ENCODE measurements at regions of chr3 and their contacts with region 1.

Region 1: DNA sequence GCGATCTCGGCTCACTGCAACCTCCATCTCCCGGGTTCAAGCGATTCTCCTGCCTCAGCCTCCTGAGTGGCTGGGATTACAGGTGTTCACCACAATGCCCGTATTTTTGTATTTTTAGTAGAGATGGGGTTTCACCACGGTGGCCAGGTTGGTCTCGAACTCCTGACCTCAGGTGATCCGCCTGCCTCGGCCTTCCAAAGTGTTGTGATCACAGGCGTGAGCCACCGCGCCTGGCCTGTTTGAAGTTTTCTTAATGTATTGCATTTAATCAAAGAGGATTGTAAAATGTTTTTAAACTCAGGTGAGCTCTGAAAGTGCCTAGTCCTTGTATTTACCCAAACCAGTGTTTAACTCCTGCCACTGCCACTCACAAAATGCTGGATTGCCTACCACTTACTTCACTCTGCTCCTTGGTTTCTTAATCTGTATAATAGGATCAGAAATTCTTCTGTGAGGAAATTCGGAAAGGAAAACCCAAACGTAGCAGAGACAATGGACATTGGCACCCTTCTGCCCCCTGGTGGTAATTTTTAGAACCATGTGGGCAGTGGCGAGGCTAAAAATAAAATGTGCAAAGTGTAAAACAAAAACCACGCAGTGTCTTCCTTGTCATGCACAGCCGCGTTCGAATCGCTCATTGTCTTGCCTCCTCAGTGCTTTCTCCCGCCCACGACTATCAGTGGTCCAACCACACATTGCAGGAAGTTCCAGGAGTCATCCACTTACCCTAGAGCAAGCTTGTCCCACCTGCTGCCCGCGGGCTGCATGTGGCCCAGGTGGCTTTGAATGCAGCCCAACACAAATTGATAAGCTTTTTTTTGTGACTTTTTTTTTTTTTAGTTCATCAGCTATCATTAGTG is 27.3 kb downstream of the CEP19 start:
- DNase-seq: no peak
- H3K4me3 ChIP-seq: peak overlapping the region in 1 of 4 donors; percentile 18
- H3K27ac ChIP-seq: no peak overlapping the region
- H3K4me1 ChIP-seq: peaks cover 9 to 17% (median 10%) of the 10 kb centered on the region in 4 donors
- H3K27me3 ChIP-seq: no peaks in the 10 kb centered on the region
- CTCF ChIP-seq: peak; percentile 92 to 96 (median 92)
- EP300 ChIP-seq: no peak
- POLR2A ChIP-seq: no peak

Region 2: GRCh38 chr3:196609343-196609775 is 75.4 kb before region 1 on chr3:
- intact Hi-C with region 1: loop called (anchors 1 kb)
- DNase-seq: peak; percentile 95
- H3K4me3 ChIP-seq: no peak overlapping the region
- H3K27ac ChIP-seq: peak overlapping the region; percentile 63 to 74 (median 72)
- H3K4me1 ChIP-seq: peaks cover 17 to 47% (median 38%) of the 10 kb centered on the region in 4 donors
- H3K27me3 ChIP-seq: no peaks in the 10 kb centered on the region
- CTCF ChIP-seq: peak; percentile 92 to 93 (median 93)
- EP300 ChIP-seq: no peak
- POLR2A ChIP-seq: no peak

Region 3: DNA sequence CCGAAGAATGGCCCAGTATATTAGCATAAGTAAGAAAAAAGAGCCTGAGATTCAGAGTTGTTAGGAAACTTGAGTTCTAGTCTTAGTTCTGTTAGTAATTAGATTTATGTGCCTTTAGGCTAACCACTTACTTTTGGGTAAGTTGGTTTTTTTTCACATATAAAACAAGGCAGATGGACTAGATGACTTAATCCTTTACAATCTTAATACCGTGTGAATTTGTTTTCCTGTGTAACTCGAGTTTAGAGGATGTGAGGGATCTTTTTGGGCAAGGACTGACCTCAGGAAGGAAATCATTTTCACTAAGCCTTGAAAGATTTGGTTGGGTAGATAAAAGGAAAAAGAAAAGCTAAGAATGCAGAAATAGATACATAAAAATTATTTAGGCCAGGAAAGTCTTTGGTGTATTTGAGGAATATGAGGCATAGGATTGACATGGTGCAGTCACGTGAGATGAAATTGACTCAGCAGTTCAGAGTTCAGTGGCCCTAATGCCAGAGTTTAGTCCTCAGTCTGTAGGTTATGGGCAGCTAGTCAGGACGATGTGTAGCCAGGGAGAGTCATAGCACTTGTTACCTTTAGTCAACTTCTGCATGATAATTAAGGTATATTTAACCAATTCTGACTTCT is 89.5 kb after region 1 on chr3:
- intact Hi-C with region 1: no loop called
- DNase-seq: no peak
- H3K4me3 ChIP-seq: no peak overlapping the region
- H3K27ac ChIP-seq: peak overlapping the region in 1 of 4 donors; percentile 31
- H3K4me1 ChIP-seq: peaks cover 31 to 66% (median 61%) of the 10 kb centered on the region in 4 donors
- H3K27me3 ChIP-seq: no peaks in the 10 kb centered on the region
- CTCF ChIP-seq: no peak
- EP300 ChIP-seq: no peak
- POLR2A ChIP-seq: no peak

Measured in esophagus muscularis mucosa (tissue), 4 donors.